ENCODE measurements at regions of chr1 and their contacts with region 1.

Region 1: DNA sequence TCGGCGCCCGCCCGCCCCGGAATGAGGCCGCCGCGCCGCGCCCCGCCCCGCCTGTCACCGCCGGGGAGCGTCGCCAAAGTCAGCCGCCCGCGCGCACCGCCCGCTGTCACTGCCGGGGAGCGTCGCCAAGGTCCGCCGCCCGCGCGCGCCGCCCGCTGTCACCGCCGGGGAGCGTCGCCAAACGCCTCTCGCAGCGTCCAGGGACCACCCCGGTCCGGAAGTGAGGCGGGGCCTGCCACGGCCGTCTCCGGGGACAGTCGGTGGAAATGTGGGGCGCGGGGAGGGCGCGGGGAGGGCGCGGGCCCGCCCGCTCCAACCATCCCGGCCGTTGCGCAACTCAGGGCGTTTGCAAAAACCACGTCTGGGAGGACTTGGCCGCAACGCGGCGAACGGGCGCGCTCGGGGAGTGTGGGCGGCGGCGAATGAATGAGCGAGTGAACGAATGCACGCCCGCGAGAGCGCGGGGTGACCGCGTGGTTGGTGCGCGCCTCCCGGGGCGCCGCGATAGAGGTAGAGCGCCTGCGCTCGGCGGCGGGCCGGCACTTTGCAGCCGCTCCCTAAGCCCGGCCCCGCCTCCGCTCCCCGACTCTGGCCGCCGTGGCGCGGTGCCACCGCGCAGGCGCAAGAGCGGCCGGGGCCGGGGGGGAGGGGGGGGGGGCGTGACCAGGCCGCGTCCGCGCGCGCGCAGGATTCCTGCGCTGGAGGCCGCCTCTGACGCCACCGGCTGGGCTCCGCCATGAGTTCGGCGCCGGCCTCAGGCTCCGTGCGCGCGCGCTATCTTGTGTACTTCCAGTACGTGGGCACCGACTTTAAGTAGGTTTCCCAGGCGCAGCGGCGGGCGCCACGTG is at the starts of genes ACAP3 and PUSL1:
- DNase-seq: peak; percentile 95 to 99 (median 97)
- ATAC-seq: peak; percentile 52
- H3K4me3 ChIP-seq: peak within 1 kb of the TSS; percentile 94
- H3K27ac ChIP-seq: peak within 1 kb of the TSS; percentile 96
- H3K4me1 ChIP-seq: peaks cover 41 to 97% of the 10 kb centered on the region in 2 experiments
- H3K27me3 ChIP-seq: no peaks in the 10 kb centered on the region
- CTCF ChIP-seq: peak in 1 of 3 experiments; percentile 2; a peak in 1 of 6 replicates
- EP300 ChIP-seq: no peak
- POLR2A ChIP-seq: peak; percentile 63
- RAD21 ChIP-seq: no peak
- polyA plus RNA-seq, gene ACAP3: 0.01 to 0.06 TPM
- polyA plus RNA-seq, gene PUSL1: 0.62 to 1.7 TPM

Region 2: GRCh38 chr1:1318131-1318652 is 10.1 kb after region 1 on chr1:
- CTCF ChIA-PET with region 1: no interaction called
- POLR2A ChIA-PET with region 1: interaction called, 30 read pairs
- in situ Hi-C with region 1: no loop called
- intact Hi-C with region 1: no loop called
- DNase-seq: peak in 1 of 4 experiments; percentile 87
- ATAC-seq: peak; percentile 85
- H3K4me3 ChIP-seq: no peak overlapping the region
- H3K27ac ChIP-seq: no peak overlapping the region
- H3K4me1 ChIP-seq: peaks cover 33 to 86% of the 10 kb centered on the region in 2 experiments
- H3K27me3 ChIP-seq: no peaks in the 10 kb centered on the region
- CTCF ChIP-seq: no peak
- EP300 ChIP-seq: peak; percentile 29; the same call in 1 of the 2 replicates
- POLR2A ChIP-seq: no peak
- RAD21 ChIP-seq: no peak

Region 3: DNA sequence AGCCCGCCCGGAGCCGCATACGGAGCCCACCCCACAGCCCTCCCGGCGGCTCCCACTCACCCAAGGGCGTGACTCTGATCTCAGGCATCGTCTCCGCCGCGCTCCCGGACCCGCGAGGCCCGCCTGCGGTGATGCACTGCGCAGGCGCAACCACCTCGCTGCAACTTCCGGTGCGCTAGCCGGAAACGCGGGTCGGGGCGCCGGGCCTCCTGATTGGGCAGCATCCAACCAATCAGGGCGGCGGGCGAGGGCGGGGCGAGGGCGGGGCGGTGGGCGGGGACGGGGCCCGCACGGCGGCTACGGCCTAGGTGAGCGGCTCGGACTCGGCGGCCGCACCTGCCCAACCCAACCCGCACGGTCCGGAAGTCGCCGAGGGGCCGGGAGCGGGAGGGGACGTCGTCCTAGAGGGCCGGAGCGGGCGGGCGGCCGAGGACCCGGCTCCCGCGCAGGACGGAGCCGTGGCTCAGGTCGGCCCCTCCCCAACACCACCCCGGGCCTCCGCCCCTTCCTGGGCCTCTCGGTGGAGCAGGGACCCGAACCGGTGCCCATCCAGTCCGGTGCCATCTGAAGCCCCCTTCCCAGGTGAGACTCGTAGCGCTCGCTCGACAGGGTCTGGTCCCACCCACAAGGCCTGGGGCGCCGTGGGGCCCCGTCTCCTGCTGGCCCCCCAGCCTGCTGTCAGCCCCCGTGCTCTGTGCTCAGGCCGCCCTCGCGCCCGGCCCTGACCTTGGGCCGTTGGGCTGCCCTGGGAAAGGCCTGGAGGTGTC is 16.6 kb after region 1 on chr1 and contains the starts of genes CPTP and INTS11:
- CTCF ChIA-PET with region 1: no interaction called
- POLR2A ChIA-PET with region 1: interaction called, 30 read pairs
- in situ Hi-C with region 1: no loop called
- intact Hi-C with region 1: loop called (anchors 2 kb)
- DNase-seq: peak; percentile 97 to 99 (median 98)
- ATAC-seq: peak; percentile 92
- H3K4me3 ChIP-seq: peak within 1 kb of the TSS; percentile 99
- H3K27ac ChIP-seq: peak within 1 kb of the TSS; percentile 89
- H3K4me1 ChIP-seq: peaks cover 16 to 90% of the 10 kb centered on the region in 2 experiments
- H3K27me3 ChIP-seq: no peaks in the 10 kb centered on the region
- CTCF ChIP-seq: no peak
- EP300 ChIP-seq: no peak
- POLR2A ChIP-seq: peak; percentile 89
- RAD21 ChIP-seq: 0 out of 4 replicates have a peak, but pooled peaks of 1 of the 2 experiments have one; percentile 3
- polyA plus RNA-seq, gene CPTP: 0.11 to 0.20 TPM
- polyA plus RNA-seq, gene INTS11: 3.6 to 11.8 TPM

Region 4: DNA sequence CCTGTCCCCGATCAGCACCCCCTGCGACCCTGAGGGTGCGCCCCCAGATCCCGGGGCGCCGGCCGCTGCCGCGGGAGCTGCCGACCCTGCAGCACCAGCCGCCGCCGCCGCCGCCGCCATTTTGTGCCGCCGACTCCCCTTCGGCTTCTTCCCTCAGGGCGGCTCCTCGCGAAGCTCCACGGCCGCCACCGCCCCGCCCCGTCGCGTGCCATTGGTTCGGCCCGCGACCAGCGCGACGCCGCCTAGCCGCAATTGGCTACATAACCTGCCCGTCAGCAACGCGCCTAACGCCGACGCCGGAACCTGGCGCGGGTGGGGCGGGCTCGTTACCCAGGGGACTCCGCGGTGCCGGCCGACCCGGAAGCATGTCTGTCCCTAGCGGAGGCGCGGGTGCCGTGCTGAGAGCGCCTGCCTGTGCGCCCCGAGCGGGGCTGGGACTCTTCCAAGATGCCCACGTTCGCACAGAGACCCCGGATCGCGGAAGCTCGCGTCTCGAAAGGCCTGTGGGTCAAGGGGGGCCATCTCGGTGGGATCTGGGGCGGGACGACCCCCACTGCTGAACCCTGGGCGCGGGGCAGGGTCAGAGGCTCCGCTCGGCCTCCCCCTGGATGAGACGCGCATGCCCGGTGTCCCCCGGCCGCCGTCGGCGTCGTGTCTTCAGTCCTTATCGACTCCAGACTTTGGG is 91.2 kb after region 1 on chr1 and contains the start of gene CCNL2:
- CTCF ChIA-PET with region 1: no interaction called
- POLR2A ChIA-PET with region 1: no interaction called
- in situ Hi-C with region 1: no loop called
- intact Hi-C with region 1: no loop called
- DNase-seq: peak; percentile 96 to 100 (median 98)
- ATAC-seq: peak; percentile 96
- H3K4me3 ChIP-seq: peak within 1 kb of the TSS; percentile 100
- H3K27ac ChIP-seq: peak within 1 kb of the TSS; percentile 98
- H3K4me1 ChIP-seq: peaks cover 19 to 46% of the 10 kb centered on the region in 2 experiments
- H3K27me3 ChIP-seq: no peaks in the 10 kb centered on the region
- CTCF ChIP-seq: peak; percentile 67 to 76 (median 71)
- EP300 ChIP-seq: peak; percentile 34; the same call in 1 of the 2 replicates
- POLR2A ChIP-seq: peak; percentile 92
- RAD21 ChIP-seq: no peak; a peak in 2 of 4 replicates
- polyA plus RNA-seq, gene CCNL2: 2.8 to 5.6 TPM

Measured in K562 (cell line).